ENCODE measurements at regions of chr5 and their contacts with region 1.

Region 1: DNA sequence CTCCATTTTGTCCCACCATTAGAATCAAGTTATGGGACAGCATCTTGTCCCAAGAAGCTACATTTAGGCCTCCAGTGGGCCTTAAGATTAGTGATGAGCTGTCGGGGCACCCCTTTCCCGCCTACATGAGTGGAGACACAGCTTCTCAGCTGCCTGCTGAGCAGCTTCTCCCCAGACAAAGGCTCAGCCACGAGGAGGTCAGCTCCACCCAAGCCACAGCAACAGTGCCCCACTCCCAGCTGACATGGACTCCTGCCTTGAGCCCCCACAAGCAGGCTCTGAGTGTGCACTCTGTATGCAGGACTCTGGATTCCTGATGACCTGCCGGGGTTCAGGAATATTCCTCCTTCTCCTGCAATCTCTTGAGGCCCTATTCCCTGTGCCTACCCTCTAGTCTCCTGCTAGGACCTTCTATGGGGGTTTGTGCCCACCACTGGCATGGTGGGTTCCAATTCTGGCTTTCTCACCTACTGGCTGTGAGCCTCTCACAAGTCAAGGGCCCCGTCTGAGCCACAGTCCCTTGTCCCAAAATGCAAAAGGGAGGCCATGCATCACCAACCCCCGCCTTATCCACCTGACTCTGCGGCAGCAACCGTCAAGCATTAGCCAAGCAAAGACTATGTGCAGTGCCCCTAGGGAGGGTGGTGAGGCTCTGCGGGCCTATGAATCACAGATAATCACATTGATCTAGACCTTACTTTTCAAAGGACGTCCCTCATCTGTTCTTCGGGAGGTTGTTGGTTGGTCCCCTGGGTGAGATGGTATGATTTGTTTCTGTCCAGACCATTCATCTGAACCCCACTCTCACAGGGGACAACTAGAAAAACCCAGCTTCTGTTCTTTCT is 269.1 kb downstream of the MED10 start:
- DNase-seq: no peak
- H3K4me3 ChIP-seq: no peak overlapping the region
- H3K27ac ChIP-seq: no peak overlapping the region
- H3K4me1 ChIP-seq: no peaks in the 10 kb centered on the region
- H3K27me3 ChIP-seq: no peaks in the 10 kb centered on the region
- CTCF ChIP-seq: no peak

Region 2: GRCh38 chr5:6096101-6096500 is 13.1 kb before region 1 on chr5:
- intact Hi-C with region 1: loop called (anchors 1 kb)
- DNase-seq: no peak
- H3K4me3 ChIP-seq: no peak overlapping the region
- H3K27ac ChIP-seq: no peak overlapping the region
- H3K4me1 ChIP-seq: no peaks in the 10 kb centered on the region
- H3K27me3 ChIP-seq: no peaks in the 10 kb centered on the region
- CTCF ChIP-seq: no peak

Measured in tibial artery (tissue), 4 donors.